Body of pancreas (tissue), 4 donors: ENCODE measurements at regions of chr16 and their contacts with region 1.

Region 1: DNA sequence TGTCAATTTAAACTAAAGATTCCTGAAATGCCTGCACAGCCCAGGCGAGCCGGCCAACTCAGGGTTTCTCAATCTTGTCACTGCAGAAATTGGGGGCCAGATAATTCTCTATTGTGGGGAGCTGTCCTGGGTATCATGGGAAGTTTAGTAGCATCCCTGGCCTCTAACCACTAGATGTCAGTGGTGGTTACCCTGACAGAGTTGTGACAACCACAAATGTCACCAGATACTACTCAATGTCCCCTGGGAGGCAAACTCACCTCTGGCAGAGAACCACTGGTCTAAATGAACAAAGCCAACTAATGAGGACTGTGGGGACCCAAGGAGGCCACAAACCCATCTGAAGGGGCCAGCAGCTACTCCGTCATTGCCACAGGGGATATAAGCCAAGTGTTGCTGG is 90.9 kb downstream of the MYH11 start:
- DNase-seq: peak; percentile 22 to 48 (median 30)
- ATAC-seq: peak; percentile 71
- H3K4me3 ChIP-seq: no peak overlapping the region
- H3K27ac ChIP-seq: no peak overlapping the region
- H3K4me1 ChIP-seq: no peaks in the 10 kb centered on the region
- H3K27me3 ChIP-seq: no peaks in the 10 kb centered on the region
- CTCF ChIP-seq: peak; percentile 30 to 66 (median 62)
- POLR2A ChIP-seq: no peak

Region 2: GRCh38 chr16:16127469-16128116 is 361.7 kb after region 1 on chr16:
- intact Hi-C with region 1: loop called (anchors 10 kb)
- DNase-seq: peak; percentile 73 to 83 (median 79)
- ATAC-seq: peak; percentile 90
- H3K4me3 ChIP-seq: no peak overlapping the region
- H3K27ac ChIP-seq: peak overlapping the region in 1 of 4 donors; percentile 47
- H3K4me1 ChIP-seq: no peaks in the 10 kb centered on the region
- H3K27me3 ChIP-seq: no peaks in the 10 kb centered on the region
- CTCF ChIP-seq: peak; percentile 67 to 99 (median 93)
- POLR2A ChIP-seq: no peak

Region 3: DNA sequence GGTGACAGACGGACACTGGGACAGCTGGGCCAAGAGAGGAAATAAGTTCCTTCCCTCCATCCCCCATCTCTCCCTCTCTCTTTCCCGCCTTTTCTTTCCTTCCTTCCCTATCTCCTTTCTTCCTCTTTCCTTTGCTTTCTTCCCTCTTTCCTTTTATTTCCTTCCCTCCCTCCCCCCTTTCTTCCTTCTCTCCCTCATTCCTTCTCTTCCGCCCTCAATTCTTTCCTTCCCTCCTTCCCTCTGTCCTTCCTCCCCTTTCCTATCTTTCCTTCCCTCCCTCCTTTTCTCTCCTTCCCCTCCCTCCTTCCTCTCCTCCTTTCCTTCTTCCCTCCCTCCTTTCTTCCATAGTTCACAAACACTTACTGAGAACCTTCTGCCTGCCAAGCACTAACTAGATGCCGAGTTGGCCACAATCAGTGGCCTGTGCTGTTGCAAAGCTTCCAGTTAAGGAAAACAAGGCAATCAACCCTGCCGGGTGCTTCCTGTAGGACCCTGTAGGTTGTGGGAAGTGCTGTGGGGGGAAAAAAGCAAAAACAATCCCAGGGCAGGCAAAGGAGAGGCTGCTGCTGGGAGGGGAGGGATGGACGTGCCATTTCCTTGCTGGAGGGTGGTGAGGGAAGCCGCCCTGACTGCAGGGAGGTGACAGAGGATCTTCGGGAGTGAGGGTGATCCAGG is 425.8 kb after region 1 on chr16:
- intact Hi-C with region 1: loop called (anchors 10 kb)
- DNase-seq: no peak
- ATAC-seq: no peak
- H3K4me3 ChIP-seq: no peak overlapping the region
- H3K27ac ChIP-seq: no peak overlapping the region
- H3K4me1 ChIP-seq: no peaks in the 10 kb centered on the region
- H3K27me3 ChIP-seq: no peaks in the 10 kb centered on the region
- CTCF ChIP-seq: no peak
- POLR2A ChIP-seq: no peak